GM10248 (cell line): ENCODE measurements at regions of chr6 and their contacts with region 1.

Region 1: GRCh38 chr6:30533460-30534294 is 22.6 kb downstream of the GNL1 start:
- DNase-seq: no peak
- CTCF ChIP-seq: no peak

Region 2: DNA sequence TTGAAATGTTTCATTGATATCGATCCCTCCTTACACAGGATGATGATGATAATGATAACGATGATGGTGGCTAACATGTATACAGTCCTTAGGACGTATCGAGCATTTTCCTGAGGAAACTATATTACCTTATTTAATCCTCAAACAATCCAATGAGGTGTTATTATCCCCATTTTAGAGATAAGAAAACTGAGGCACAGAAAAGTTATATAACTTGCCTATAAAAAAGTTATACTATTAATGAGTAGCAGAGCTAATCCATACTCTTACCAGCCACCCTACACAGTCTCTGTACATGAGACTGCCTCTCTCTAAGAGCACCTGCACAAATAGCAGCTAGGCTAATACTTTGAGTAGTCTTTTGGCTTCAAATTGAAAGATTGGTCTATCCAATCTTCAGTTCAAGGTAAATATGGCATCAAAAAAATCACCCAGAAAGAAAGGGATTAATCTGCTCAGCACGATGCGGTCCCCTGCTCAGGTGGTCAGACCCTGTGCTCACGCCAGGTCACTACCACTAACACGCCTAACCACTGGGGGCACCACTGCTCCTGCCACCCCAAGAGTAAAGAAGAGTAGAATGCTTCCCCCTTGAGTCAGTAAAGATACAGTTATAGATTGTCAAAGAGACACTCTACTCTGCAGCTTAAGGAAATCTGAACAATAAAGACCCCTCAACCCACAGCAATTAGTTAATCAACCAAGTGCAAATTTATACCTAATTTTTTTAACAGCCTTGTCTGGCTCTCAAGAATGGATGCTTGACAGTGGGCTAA is 915.7 kb before region 1 on chr6:
- CTCF ChIA-PET with region 1: no interaction called
- POLR2A ChIA-PET with region 1: no interaction called
- DNase-seq: no peak
- CTCF ChIP-seq: peak; percentile 29

Region 3: GRCh38 chr6:30489081-30490025 is 44.3 kb before region 1 on chr6 and contains the start of gene HLA-E:
- CTCF ChIA-PET with region 1: interaction called, 278 read pairs
- POLR2A ChIA-PET with region 1: interaction called, 12 read pairs
- DNase-seq: peak; percentile 93
- CTCF ChIP-seq: no peak

Region 4: DNA sequence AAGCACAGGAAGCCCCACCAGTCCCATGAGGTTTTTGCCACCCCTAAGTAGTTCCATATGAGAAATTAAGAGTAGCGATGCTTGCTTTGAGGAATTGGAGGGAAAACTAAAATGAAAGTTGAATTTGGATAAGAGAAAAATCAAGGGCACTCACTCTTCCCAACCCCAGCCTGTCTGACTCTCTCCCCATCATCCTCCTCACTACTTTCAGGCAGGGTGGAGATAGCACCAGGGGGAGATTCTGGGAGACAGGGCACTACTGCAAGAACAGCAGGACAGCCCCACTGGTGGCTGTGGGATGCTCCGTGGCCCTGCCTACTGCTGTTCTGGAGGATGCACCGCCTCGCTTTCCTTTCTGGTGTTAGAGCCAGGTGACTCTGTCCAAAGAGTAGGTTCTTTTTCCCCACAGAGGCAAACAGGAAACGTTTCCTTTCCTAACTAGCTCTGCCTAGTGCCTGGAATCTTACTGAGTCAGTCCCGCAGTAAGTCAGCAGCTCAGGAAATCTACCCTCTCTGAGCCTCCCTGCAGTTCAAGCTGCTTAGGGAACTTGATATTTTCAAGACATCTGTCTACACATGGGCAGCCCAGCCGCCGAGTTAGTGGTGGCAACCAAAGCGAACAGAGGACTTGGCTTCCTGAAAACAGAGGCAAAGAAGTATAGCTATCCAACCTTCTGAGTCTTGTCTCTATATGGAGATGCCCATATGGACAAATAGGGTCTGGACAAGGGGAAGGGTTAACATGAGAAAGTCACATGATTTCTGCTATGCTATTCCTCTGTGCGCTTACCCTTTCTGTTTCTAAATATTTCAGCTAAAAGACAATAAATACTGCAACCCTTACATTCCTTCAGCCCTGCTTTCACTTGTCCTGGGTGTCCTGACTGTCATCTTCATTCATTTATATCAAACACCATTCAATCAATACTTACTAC is 33.0 kb before region 1 on chr6:
- CTCF ChIA-PET with region 1: interaction called, 17 read pairs
- POLR2A ChIA-PET with region 1: no interaction called
- DNase-seq: no peak
- CTCF ChIP-seq: no peak

Region 5: GRCh38 chr6:30508890-30509736 is 24.6 kb before region 1 on chr6:
- CTCF ChIA-PET with region 1: interaction called, 17 read pairs
- POLR2A ChIA-PET with region 1: no interaction called
- DNase-seq: peak; percentile 50
- CTCF ChIP-seq: no peak

Region 6: DNA sequence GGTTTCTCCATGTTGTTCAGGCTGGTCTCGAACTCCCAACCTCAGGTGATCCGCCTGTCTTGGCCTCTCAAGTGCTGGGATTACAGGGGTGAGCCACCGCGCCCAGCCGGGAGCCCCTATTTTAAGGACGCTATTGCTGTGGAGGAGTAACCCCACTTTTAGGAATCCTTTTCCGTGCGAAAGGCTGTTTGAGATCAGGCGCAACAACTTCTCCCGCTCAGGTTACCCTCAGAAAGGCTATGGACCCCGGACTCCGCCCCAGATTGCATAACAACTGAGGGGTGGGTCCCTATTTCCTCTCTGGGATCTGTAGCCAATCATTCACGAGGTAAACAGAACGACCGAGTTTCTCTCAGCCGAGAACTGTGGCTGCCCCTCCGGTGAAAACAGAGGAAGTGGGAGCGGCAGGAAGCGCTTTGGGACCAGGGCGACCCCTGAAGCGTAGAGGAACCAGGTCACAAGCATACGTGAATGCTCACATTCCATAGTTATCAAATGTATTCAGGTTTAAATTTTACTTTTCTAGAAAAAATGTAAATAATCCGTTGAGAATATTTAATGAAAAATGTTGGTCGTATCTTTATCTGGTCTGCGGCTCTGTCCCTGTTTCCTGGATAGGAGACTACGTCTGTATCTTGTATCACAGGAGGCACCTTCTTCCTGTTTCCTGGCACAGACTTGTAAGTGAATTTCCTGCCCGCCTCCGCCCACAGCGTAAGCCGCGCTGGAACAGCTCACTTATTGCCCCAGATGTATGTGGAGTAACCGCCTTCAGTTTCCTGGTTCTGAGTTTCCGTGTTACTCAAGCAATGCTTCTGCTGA is 17.5 kb before region 1 on chr6:
- CTCF ChIA-PET with region 1: interaction called, 16 read pairs
- POLR2A ChIA-PET with region 1: no interaction called
- DNase-seq: peak; percentile 78
- CTCF ChIP-seq: no peak

Region 7: GRCh38 chr6:30600451-30600961 is 66.8 kb after region 1 on chr6:
- CTCF ChIA-PET with region 1: interaction called, 17 read pairs
- POLR2A ChIA-PET with region 1: no interaction called
- DNase-seq: no peak
- CTCF ChIP-seq: no peak